CD4-positive, alpha-beta memory T cell (primary cell): ENCODE measurements at regions of chr14 and their contacts with region 1.

Region 1: GRCh38 chr14:90256354-90257131 is at the start of gene PSMC1:
- DNase-seq: peak; percentile 83 to 89 (median 85)
- H3K4me3 ChIP-seq: peak within 1 kb of the TSS; percentile 77 to 92
- H3K4me3 Mint-ChIP-seq: peak within 1 kb of the TSS; percentile 97 to 99 (median 98)
- H3K27ac ChIP-seq: peak within 1 kb of the TSS; percentile 82
- H3K27ac Mint-ChIP-seq: peak within 1 kb of the TSS; percentile 94 to 99 (median 97)
- H3K4me1 ChIP-seq: peaks cover 23% of the 10 kb centered on the region
- H3K4me1 Mint-ChIP-seq: peaks cover 23 to 40% (median 32%) of the 10 kb centered on the region in 4 donors
- H3K27me3 ChIP-seq: no peaks in the 10 kb centered on the region
- H3K27me3 Mint-ChIP-seq: peaks cover 3 to 11% of the 10 kb centered on the region in 2 donors
- total RNA-seq, gene PSMC1: 42.1 to 52.5 TPM

Region 2: DNA sequence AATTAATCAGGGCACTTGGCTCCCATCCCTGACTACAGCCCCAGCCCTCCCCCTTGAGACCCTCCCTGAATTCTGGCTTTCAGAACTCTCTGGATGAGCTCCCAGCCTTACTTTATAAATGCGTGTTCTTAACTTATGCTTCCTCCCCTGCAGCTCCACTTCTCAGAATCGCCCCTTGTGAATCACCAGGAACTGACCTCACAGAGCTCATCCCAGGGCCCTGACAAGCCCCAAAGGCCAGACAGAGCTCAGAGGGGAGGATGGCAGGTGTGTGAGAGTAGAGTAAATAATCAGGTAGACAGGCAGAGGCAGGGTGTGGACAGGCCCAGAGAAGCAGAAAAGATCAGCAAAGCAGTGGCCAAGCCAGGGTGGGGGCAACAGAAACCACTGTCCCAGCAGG is 771.3 kb before region 1 on chr14:
- CTCF ChIA-PET with region 1: no interaction called
- POLR2A ChIA-PET with region 1: no interaction called
- intact Hi-C with region 1: no loop called
- DNase-seq: no peak
- H3K4me3 ChIP-seq: no peak overlapping the region
- H3K4me3 Mint-ChIP-seq: no peak overlapping the region
- H3K27ac ChIP-seq: no peak overlapping the region
- H3K27ac Mint-ChIP-seq: peak overlapping the region in 1 of 7 donors; percentile 31
- H3K4me1 ChIP-seq: no peaks in the 10 kb centered on the region
- H3K4me1 Mint-ChIP-seq: peaks cover 9 to 26% (median 18%) of the 10 kb centered on the region in 4 donors
- H3K27me3 ChIP-seq: no peaks in the 10 kb centered on the region
- H3K27me3 Mint-ChIP-seq: no peaks in the 10 kb centered on the region

Region 3: GRCh38 chr14:90235179-90235976 is 21.2 kb before region 1 on chr14:
- CTCF ChIA-PET with region 1: no interaction called
- POLR2A ChIA-PET with region 1: no interaction called
- intact Hi-C with region 1: no loop called
- DNase-seq: peak in 4 of 5 donors; percentile 35 to 51 (median 38)
- H3K4me3 ChIP-seq: no peak overlapping the region
- H3K4me3 Mint-ChIP-seq: peak overlapping the region in 1 of 8 donors; percentile 34
- H3K27ac ChIP-seq: no peak overlapping the region
- H3K27ac Mint-ChIP-seq: no peak overlapping the region
- H3K4me1 ChIP-seq: no peaks in the 10 kb centered on the region
- H3K4me1 Mint-ChIP-seq: peaks cover 0 to 5% (median 0%) of the 10 kb centered on the region in 4 donors
- H3K27me3 ChIP-seq: no peaks in the 10 kb centered on the region
- H3K27me3 Mint-ChIP-seq: peaks cover 8 to 12% of the 10 kb centered on the region in 2 donors

Region 4: GRCh38 chr14:90276646-90277367 is 20.3 kb after region 1 on chr14:
- CTCF ChIA-PET with region 1: no interaction called
- POLR2A ChIA-PET with region 1: no interaction called
- intact Hi-C with region 1: no loop called
- DNase-seq: no peak
- H3K4me3 ChIP-seq: no peak overlapping the region
- H3K4me3 Mint-ChIP-seq: no peak overlapping the region
- H3K27ac ChIP-seq: no peak overlapping the region
- H3K27ac Mint-ChIP-seq: peak overlapping the region in 2 of 7 donors; percentile 12 to 63
- H3K4me1 ChIP-seq: peaks cover 11% of the 10 kb centered on the region
- H3K4me1 Mint-ChIP-seq: peaks cover 9 to 17% (median 12%) of the 10 kb centered on the region in 4 donors
- H3K27me3 ChIP-seq: no peaks in the 10 kb centered on the region
- H3K27me3 Mint-ChIP-seq: no peaks in the 10 kb centered on the region

Region 5: DNA sequence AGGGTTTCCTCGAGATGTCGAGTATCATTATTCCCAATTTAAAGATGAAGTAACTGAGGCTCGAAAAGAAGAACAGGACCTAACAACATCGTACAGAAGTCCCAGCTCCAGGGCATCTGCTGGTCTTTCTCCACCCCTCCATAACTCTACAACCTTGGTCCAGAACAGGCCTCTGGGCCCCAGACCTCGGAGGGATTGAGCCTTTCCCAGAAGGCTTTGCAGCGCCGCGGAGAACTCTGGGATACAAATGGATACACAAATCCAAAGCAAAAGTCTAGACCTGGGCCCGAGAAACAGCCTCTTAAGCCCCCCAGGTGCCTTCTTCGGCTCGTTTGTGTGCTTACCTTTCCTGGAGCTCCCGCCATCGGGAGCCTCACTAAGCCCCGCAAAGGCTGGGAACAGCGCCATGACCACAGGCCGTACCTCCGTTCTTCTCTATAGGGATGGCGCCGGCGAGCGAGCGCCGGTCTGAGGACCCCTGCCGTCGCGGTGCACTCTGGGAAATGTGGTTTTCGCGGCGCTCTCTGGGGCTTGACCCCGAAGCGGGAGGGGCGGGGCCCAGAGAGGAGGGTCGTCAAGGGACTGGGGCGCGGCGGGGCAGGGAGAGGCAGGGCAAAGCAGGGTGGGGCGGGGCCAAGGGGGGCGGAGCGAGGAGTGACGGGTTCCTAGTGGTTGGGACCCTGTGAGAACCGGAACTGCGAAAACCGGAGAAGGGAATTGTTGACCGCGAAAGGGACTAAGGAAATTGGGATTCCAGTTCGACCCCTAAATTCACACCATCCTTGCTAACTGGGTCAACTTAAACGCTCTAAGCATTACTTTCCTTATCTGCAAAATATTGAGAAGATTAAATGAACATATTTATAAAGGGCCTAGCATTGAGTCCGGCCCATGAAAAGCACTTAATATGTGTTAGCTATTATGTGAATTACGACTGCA is 75.2 kb after region 1 on chr14 and contains the start of gene NRDE2:
- CTCF ChIA-PET with region 1: no interaction called
- POLR2A ChIA-PET with region 1: interaction called, 3 read pairs
- intact Hi-C with region 1: loop called (anchors 5 kb)
- DNase-seq: peak; percentile 85 to 87 (median 86)
- H3K4me3 ChIP-seq: peak within 1 kb of the TSS; percentile 63 to 92
- H3K4me3 Mint-ChIP-seq: peak within 1 kb of the TSS; percentile 90 to 96 (median 93)
- H3K27ac ChIP-seq: peak within 1 kb of the TSS; percentile 70
- H3K27ac Mint-ChIP-seq: peak within 1 kb of the TSS; percentile 91 to 97 (median 96)
- H3K4me1 ChIP-seq: peaks cover 15% of the 10 kb centered on the region
- H3K4me1 Mint-ChIP-seq: peaks cover 14 to 38% (median 31%) of the 10 kb centered on the region in 4 donors
- H3K27me3 ChIP-seq: no peaks in the 10 kb centered on the region
- H3K27me3 Mint-ChIP-seq: peaks cover 7% of the 10 kb centered on the region in 2 donors
- total RNA-seq, gene NRDE2: 26.3 to 32.6 TPM